HCT116 (cell line): ENCODE measurements at regions of chr1 and their contacts with region 1.

Region 1: GRCh38 chr1:158059984-158060383 is 66.5 kb downstream of the KIRREL1 start:
- DNase-seq: no peak
- ATAC-seq: no peak
- H3K4me3 ChIP-seq: no peak overlapping the region
- H3K27ac ChIP-seq: no peak overlapping the region
- H3K4me1 ChIP-seq: no peaks in the 10 kb centered on the region
- H3K27me3 ChIP-seq: no peaks in the 10 kb centered on the region
- CTCF ChIP-seq: no peak
- POLR2A ChIP-seq: no peak
- RAD21 ChIP-seq: no peak

Region 2: GRCh38 chr1:158049853-158050252 is 10.1 kb before region 1 on chr1:
- CTCF ChIA-PET with region 1: no interaction called
- POLR2A ChIA-PET with region 1: no interaction called
- RAD21 ChIA-PET with region 1: no interaction called
- intact Hi-C with region 1: loop called (anchors 1 kb)
- DNase-seq: no peak
- ATAC-seq: no peak
- H3K4me3 ChIP-seq: no peak overlapping the region
- H3K27ac ChIP-seq: no peak overlapping the region
- H3K4me1 ChIP-seq: peaks cover 0 to 13% of the 10 kb centered on the region in 2 experiments; a peak in 2 of 4 replicates
- H3K27me3 ChIP-seq: no peaks in the 10 kb centered on the region
- CTCF ChIP-seq: no peak
- POLR2A ChIP-seq: no peak
- RAD21 ChIP-seq: no peak